ENCODE measurements at regions of chr7 and their contacts with region 1.

Region 1: DNA sequence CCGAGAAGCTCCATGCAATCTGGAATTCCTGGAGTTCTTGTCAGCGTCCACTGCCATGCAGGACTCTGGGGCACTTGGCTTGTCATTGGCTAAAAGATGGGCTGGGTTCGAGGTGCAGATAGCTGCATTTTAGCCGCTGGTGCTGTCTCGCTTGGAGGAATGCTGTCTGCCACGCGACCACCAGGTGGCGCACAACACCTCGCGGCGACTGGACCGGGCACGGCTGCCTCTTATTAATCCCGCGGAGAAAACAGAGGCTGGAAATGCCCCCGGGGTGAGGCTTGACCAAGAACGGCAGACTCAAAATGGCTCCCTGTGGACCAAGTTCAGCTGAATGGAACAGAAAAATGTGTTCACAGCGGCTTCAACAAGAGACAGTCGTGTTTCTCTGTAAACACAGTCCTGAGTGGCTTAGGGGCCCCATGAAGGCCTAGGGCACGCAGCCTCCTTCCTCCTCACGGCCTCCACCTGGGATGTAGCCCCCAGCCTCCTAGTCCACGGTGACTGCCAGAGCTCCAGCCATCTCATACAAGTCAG is 46.2 kb downstream of the AOC1 start:
- DNase-seq: peak; percentile 79
- ATAC-seq: peak; percentile 70
- H3K4me3 ChIP-seq: peak overlapping the region in 2 of 5 experiments; percentile 29 to 39
- H3K4me3 Mint-ChIP-seq: peak overlapping the region; percentile 51
- H3K27ac ChIP-seq: peak overlapping the region in 1 of 2 donors; percentile 81
- H3K27ac Mint-ChIP-seq: peak overlapping the region; percentile 28
- H3K4me1 ChIP-seq: peaks cover 26 to 55% of the 10 kb centered on the region in 2 donors
- H3K4me1 Mint-ChIP-seq: peaks cover 38% of the 10 kb centered on the region
- H3K27me3 ChIP-seq: peaks cover 0 to 18% (median 9%) of the 10 kb centered on the region in 4 experiments
- H3K27me3 Mint-ChIP-seq: peaks cover 44% of the 10 kb centered on the region
- CTCF ChIP-seq: peak; percentile 96

Region 2: GRCh38 chr7:150448789-150449147 is 449.8 kb before region 1 on chr7:
- CTCF ChIA-PET with region 1: interaction called, 3 read pairs
- POLR2A ChIA-PET with region 1: no interaction called
- intact Hi-C with region 1: loop called (anchors 5 kb)
- DNase-seq: peak; percentile 83
- ATAC-seq: peak; percentile 84
- H3K4me3 ChIP-seq: no peak overlapping the region
- H3K4me3 Mint-ChIP-seq: peak overlapping the region; percentile 3
- H3K27ac ChIP-seq: no peak overlapping the region
- H3K27ac Mint-ChIP-seq: peak overlapping the region; percentile 54
- H3K4me1 ChIP-seq: peaks cover 29 to 43% of the 10 kb centered on the region in 2 donors
- H3K4me1 Mint-ChIP-seq: peaks cover 44% of the 10 kb centered on the region
- H3K27me3 ChIP-seq: peaks cover 0 to 37% (median 6%) of the 10 kb centered on the region in 4 experiments
- H3K27me3 Mint-ChIP-seq: peaks cover 24% of the 10 kb centered on the region
- CTCF ChIP-seq: peak; percentile 93

Region 3: DNA sequence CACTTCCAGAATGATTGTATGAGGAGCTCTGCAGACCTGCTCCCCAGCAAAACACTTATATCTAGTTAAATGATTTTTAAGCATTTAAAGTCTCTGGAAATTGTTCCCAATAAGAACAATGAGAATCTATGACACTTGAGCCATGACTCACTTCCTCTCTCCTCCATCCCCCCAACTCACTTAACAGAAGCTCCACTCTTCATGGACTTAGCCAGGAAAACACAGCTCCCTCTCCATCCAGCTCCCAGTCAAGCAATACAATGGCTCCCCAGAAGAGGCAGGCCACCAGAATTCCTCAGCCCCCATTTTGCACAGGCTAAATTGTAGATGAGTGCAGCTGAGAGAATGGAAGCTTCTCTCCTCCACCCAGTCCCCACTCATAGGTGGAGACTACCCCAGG is 19.2 kb before region 1 on chr7:
- CTCF ChIA-PET with region 1: interaction called, 15 read pairs
- POLR2A ChIA-PET with region 1: no interaction called
- intact Hi-C with region 1: no loop called
- DNase-seq: no peak
- ATAC-seq: no peak
- H3K4me3 ChIP-seq: no peak overlapping the region
- H3K4me3 Mint-ChIP-seq: no peak overlapping the region
- H3K27ac ChIP-seq: no peak overlapping the region
- H3K27ac Mint-ChIP-seq: no peak overlapping the region
- H3K4me1 ChIP-seq: peaks cover 0 to 18% of the 10 kb centered on the region in 2 donors
- H3K4me1 Mint-ChIP-seq: peaks cover 16% of the 10 kb centered on the region
- H3K27me3 ChIP-seq: no peaks in the 10 kb centered on the region
- H3K27me3 Mint-ChIP-seq: peaks cover 18% of the 10 kb centered on the region
- CTCF ChIP-seq: no peak

Region 4: GRCh38 chr7:150909200-150909995 is 10.9 kb after region 1 on chr7:
- CTCF ChIA-PET with region 1: interaction called, 11 read pairs
- POLR2A ChIA-PET with region 1: no interaction called
- intact Hi-C with region 1: no loop called
- DNase-seq: no peak
- ATAC-seq: no peak
- H3K4me3 ChIP-seq: no peak overlapping the region
- H3K4me3 Mint-ChIP-seq: no peak overlapping the region
- H3K27ac ChIP-seq: no peak overlapping the region
- H3K27ac Mint-ChIP-seq: no peak overlapping the region
- H3K4me1 ChIP-seq: peaks cover 0 to 4% of the 10 kb centered on the region in 2 donors
- H3K4me1 Mint-ChIP-seq: no peaks in the 10 kb centered on the region
- H3K27me3 ChIP-seq: peaks cover 0 to 14% (median 2%) of the 10 kb centered on the region in 4 experiments
- H3K27me3 Mint-ChIP-seq: peaks cover 22% of the 10 kb centered on the region
- CTCF ChIP-seq: no peak

Measured in B cell (primary cell).